ENCODE measurements at regions of chr11 and their contacts with region 1.

Region 1: DNA sequence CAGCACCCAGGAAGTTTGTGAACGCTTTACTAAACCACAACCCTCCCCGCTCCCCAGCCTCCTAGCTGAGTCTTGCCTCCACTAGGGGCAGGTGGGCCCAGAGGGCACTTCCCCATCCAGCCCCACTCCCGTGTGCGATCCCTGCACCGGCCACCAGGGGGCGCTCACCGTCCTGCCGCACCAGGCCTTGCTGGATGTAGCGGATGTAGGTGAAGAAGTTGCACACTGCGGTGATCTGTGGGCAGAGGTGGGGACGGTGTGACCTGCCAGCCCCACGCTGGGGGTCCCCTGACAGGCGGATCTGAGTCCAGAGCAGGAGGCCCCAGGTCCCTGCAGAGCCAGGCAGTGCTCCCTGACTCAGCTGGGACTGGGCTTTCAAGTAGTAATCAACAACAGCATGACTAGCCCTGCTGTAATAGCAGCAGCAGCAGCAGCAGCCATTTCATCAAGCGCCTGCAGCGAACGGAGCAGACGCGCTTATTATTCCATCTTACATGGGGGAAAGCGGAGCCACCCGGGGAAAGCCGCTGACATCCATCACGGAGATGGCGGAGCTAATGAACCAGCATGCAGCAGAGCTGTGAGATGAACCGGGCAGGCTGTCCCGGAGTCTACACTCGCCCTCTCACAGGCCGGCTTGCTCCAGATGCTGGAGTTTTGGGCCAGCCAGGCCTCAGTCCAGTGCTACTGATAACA is 7.9 kb upstream of the FADS3 start:
- DNase-seq: peak; percentile 89 to 96
- ATAC-seq: peak; percentile 89
- H3K4me3 ChIP-seq: no peak overlapping the region
- H3K27ac ChIP-seq: no peak overlapping the region
- H3K4me1 ChIP-seq: no peaks in the 10 kb centered on the region
- H3K27me3 ChIP-seq: no peaks in the 10 kb centered on the region

Region 2: GRCh38 chr11:61871158-61871597 is 28.1 kb before region 1 on chr11:
- intact Hi-C with region 1: loop called in 1 of 2 experiments (anchors 2 kb)
- DNase-seq: peak; percentile 90 to 95
- ATAC-seq: peak; percentile 92
- H3K4me3 ChIP-seq: no peak overlapping the region
- H3K27ac ChIP-seq: peak overlapping the region in 1 of 2 donors; percentile 49
- H3K4me1 ChIP-seq: no peaks in the 10 kb centered on the region
- H3K27me3 ChIP-seq: no peaks in the 10 kb centered on the region

Region 3: DNA sequence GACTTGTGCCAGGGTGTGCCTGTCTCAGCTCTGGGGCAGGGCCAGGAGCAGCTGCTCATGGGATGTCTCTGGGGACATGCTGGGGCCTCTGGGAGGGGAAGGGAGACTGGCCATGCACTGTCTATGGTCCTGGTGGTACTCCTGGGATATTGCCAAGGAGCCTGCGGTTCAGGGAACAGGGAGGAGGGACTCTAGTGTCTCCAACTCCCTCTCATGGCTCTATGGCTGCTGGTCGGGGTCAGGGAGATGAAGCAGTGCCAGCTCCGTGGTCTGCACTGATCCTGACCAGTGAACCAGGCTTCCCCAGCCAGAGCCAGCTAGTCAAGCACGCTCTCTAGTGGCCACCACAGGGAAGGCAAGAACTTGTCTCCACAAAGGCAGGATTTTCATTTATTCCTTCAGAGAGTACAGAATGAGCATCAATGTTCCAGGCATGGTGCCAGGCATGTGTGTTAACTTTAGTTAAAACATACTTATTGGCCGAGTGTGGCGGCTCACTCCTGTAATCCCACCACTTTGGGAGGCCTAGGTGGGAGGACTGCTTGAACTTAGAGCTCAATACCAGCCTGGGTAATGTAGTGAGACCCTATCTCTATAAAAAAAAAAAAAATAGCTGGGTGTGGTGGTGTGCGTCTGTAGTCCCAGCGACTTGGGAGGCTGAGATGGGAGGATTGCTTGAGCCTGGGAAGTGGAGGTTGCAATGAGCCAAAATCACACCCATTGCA is 48.4 kb after region 1 on chr11:
- intact Hi-C with region 1: loop called (anchors 1 kb)
- DNase-seq: peak; percentile 92 to 94
- ATAC-seq: peak; percentile 90
- H3K4me3 ChIP-seq: no peak overlapping the region
- H3K27ac ChIP-seq: no peak overlapping the region
- H3K4me1 ChIP-seq: no peaks in the 10 kb centered on the region
- H3K27me3 ChIP-seq: no peaks in the 10 kb centered on the region

Region 4: DNA sequence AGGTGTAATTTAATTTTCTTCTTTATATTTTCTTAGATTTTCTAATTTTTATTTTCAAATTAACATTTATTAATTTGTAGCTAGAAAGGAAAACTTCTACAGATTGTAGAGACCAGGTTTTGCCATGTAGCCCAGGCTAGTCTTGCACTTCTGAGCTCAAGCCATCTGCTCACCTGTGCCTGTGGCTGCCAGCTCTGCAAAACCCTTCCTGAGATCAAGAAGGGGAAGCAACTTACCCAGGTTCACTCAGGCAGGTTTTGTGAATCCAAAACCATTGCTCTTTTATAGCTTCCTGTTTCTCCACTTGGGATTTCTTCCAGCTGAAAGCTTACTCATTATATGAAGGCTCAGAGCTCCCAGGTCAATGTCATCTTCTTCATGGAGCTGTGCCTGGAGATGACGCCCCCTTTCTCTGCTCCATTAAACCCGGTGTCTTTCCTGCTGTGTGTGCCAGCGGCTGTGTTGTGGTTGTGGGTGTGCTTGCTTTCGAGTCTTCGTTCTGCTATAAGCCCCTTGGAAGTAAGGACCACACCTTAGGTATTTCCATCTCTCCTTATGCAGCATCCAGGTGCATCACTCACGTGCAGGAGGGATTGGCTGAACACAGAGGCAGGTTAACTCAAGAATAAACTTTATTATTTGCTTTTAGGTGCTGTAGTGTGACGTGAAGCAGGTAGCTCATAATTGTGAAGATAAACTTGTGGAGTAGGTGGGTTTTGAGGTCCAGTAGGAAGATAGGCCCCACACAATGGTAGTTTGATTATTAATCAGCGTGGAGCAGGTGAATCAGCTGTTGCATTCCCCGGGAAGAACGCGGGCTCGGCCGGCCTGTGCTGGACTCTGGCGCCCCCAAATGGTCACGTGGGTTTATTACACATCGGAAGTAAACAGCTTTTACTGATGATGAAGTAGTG is 182.3 kb after region 1 on chr11:
- intact Hi-C with region 1: loop called (anchors 2 kb)
- DNase-seq: peak; percentile 86 to 95
- ATAC-seq: peak; percentile 88
- H3K4me3 ChIP-seq: no peak overlapping the region
- H3K27ac ChIP-seq: no peak overlapping the region
- H3K4me1 ChIP-seq: no peaks in the 10 kb centered on the region
- H3K27me3 ChIP-seq: no peaks in the 10 kb centered on the region

Region 5: DNA sequence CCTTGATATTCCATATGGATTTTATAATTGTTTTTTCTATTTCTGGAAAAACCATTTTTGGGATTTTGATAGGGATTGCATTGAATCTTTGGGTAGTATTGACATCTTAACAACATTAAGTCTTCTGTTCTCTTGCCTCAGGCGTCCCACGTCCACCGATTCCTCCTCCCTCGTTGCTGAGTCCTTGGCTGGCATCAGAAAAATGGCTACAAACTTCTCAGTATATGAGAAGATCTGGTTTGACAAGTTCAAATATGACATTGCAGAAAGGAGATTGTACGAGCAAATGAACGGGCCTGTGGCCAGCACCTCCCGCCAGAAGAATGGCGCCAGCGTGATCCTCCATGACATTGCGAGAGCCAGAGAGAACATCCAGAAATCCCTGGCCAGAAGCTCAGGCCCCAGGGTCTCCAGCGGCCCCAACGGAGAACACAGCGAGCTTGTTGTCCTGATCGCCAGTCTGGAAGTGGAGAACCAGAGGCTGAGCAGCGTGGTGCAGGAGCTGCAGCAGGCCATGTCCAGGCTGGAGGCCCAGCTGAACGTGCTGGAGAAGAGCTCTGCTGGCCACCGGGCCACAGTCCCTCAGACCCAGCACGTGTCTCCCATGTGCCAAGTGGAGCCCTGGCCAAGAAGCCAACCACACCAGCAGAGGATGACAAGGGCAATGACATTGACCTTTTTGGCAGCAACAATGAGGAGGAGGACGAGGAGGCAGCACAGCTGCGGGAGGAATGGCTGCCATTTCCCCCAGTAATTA is 270.0 kb after region 1 on chr11:
- intact Hi-C with region 1: no loop called
- DNase-seq: no peak
- ATAC-seq: no peak
- H3K4me3 ChIP-seq: no peak overlapping the region
- H3K27ac ChIP-seq: no peak overlapping the region
- H3K4me1 ChIP-seq: no peaks in the 10 kb centered on the region
- H3K27me3 ChIP-seq: no peaks in the 10 kb centered on the region

Region 6: DNA sequence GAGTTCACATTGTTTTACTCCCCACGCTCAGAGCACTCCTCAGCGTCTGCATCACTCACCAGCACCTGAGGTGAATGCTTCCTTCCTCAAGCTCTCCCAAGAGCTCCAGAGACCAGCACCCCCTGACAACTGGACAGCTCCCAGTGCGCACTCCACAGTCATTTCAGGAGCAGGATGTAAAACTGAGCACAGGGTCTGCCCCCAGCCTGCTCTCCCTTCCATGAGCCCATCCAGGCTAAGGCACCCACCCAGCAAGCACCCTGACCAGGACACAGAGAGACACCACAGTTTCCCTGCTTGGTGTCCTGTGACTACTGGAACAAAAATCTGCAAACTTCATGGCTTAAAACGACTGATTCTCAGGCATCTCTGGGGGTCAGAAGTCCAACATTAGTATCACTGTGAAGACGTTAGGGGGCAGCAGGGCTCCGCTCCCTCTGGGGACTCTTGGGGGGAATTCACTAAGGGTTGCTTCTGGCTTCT is 346.0 kb after region 1 on chr11:
- intact Hi-C with region 1: no loop called
- DNase-seq: no peak
- ATAC-seq: no peak
- H3K4me3 ChIP-seq: no peak overlapping the region
- H3K27ac ChIP-seq: no peak overlapping the region
- H3K4me1 ChIP-seq: no peaks in the 10 kb centered on the region
- H3K27me3 ChIP-seq: no peaks in the 10 kb centered on the region